Caco-2 (cell line): ENCODE measurements at regions of chr22 and their contacts with region 1.

Region 1: GRCh38 chr22:41603873-41604332 is 14.3 kb upstream of the PMM1 start:
- DNase-seq: no peak
- H3K4me3 ChIP-seq: no peak overlapping the region
- H3K4me3 Mint-ChIP-seq: no peak overlapping the region
- H3K27ac Mint-ChIP-seq: no peak overlapping the region
- H3K4me1 ChIP-seq: no peaks in the 10 kb centered on the region
- H3K4me1 Mint-ChIP-seq: no peaks in the 10 kb centered on the region
- H3K27me3 ChIP-seq: no peaks in the 10 kb centered on the region
- H3K27me3 Mint-ChIP-seq: no peaks in the 10 kb centered on the region
- CTCF ChIP-seq: no peak

Region 2: DNA sequence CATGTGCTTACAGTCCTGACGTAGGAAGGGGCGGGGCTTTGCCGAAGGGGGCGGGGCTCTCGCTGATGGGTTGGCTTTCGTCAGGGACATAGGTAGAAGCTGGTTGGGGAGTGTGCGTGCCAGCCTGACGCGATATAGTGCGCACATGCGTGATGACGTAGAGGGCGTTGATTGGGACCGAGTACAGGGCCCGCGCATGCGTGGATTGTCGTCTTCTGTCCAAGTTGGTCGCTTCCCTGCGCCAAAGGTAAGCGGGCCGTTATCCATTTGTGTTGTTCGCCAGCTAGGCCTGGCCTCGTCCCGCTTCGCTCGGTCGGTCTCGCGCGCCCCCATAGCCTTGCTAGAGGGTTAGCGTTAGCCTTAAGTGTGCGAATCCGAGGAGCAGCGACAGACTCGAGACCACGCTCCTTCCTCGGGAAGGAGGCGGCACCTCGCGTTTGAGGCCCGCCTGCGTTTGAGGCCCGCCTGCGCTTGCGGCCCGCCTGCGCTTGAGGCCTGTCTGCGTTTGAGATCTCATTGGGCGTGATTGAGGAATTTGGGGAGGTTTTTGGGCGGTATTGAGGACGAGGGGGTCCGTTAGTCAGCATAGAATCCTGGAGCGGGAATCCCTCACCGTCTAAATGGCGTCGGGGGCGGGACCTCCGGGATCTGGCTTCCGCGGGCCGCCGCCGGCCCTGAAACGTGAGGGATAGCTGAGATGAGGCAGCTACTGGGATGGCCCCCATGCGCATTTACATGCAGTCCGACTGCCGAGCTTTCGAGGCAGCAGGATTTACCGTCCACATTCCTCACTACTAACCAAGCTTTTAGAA is 17.4 kb after region 1 on chr22 and contains the start of gene XRCC6:
- CTCF ChIA-PET with region 1: interaction called, 3 read pairs
- POLR2A ChIA-PET with region 1: interaction called, 14 read pairs
- intact Hi-C with region 1: no loop called
- DNase-seq: peak; percentile 99 to 100
- H3K4me3 ChIP-seq: peak within 1 kb of the TSS; percentile 98
- H3K4me3 Mint-ChIP-seq: peak within 1 kb of the TSS; percentile 90
- H3K27ac Mint-ChIP-seq: peak within 1 kb of the TSS; percentile 98
- H3K4me1 ChIP-seq: peaks cover 17% of the 10 kb centered on the region
- H3K4me1 Mint-ChIP-seq: no peaks in the 10 kb centered on the region
- H3K27me3 ChIP-seq: no peaks in the 10 kb centered on the region
- H3K27me3 Mint-ChIP-seq: no peaks in the 10 kb centered on the region
- CTCF ChIP-seq: no peak
- total RNA-seq, gene XRCC6: 413 and 414 TPM in 2 replicates

Region 3: DNA sequence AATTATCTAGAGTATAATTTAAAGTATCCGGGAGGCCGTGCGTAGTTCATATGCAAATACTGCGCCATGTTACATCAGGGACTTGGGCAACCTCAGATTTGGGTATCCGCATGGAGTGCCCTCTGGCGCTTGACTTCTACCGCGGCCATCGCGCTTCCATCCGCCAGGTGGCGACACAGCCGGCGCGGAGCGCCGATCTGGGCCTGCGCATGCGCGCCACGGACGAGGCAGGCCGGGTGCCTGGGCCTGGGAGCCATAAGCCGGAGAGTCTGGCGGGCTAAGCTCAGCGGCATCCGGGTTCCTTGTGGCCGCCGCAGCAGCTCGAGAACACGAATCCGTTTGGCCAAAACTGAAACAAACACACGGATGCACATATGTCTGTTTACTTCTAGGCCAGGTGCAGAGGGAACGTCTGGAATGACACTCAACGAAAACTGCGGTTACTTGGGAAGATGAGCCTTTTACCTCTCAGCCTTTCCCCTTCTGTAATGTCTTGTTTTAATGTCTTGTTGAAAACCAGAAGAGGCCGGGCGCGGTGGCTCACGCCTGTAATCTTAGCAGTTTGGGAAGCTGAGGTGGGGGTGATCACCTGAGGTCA is 62.9 kb after region 1 on chr22:
- CTCF ChIA-PET with region 1: no interaction called
- POLR2A ChIA-PET with region 1: no interaction called
- intact Hi-C with region 1: no loop called
- DNase-seq: peak; percentile 76 to 79
- H3K4me3 ChIP-seq: no peak overlapping the region
- H3K4me3 Mint-ChIP-seq: peak overlapping the region; percentile 47
- H3K27ac Mint-ChIP-seq: peak overlapping the region; percentile 53
- H3K4me1 ChIP-seq: 0 out of 2 replicates have a peak, but pooled peaks cover 4% of the 10 kb centered on the region
- H3K4me1 Mint-ChIP-seq: peaks cover 6% of the 10 kb centered on the region
- H3K27me3 ChIP-seq: no peaks in the 10 kb centered on the region
- H3K27me3 Mint-ChIP-seq: no peaks in the 10 kb centered on the region
- CTCF ChIP-seq: peak; percentile 54 to 70

Region 4: GRCh38 chr22:41688365-41689211 is 84.7 kb after region 1 on chr22 and contains the start of gene SNU13:
- CTCF ChIA-PET with region 1: no interaction called
- POLR2A ChIA-PET with region 1: no interaction called
- intact Hi-C with region 1: no loop called
- DNase-seq: peak; percentile 90 to 91
- H3K4me3 ChIP-seq: peak within 1 kb of the TSS; percentile 67
- H3K4me3 Mint-ChIP-seq: peak within 1 kb of the TSS; percentile 97
- H3K27ac Mint-ChIP-seq: peak within 1 kb of the TSS; percentile 96
- H3K4me1 ChIP-seq: peaks cover 6% of the 10 kb centered on the region; the same call in 1 of the 2 replicates
- H3K4me1 Mint-ChIP-seq: no peaks in the 10 kb centered on the region
- H3K27me3 ChIP-seq: no peaks in the 10 kb centered on the region
- H3K27me3 Mint-ChIP-seq: no peaks in the 10 kb centered on the region
- CTCF ChIP-seq: no peak
- total RNA-seq, gene SNU13: 172 and 187 TPM in 2 replicates